GM10248 (cell line): ENCODE measurements at regions of chr22 and their contacts with region 1.

Region 1: GRCh38 chr22:31290494-31291471 is 1.5 kb downstream of the PIK3IP1 start:
- DNase-seq: peak; percentile 96
- CTCF ChIP-seq: no peak

Region 2: GRCh38 chr22:31302006-31302405 is 11.2 kb after region 1 on chr22:
- CTCF ChIA-PET with region 1: interaction called, 17 read pairs
- POLR2A ChIA-PET with region 1: interaction called, 3 read pairs
- DNase-seq: no peak
- CTCF ChIP-seq: no peak

Region 3: DNA sequence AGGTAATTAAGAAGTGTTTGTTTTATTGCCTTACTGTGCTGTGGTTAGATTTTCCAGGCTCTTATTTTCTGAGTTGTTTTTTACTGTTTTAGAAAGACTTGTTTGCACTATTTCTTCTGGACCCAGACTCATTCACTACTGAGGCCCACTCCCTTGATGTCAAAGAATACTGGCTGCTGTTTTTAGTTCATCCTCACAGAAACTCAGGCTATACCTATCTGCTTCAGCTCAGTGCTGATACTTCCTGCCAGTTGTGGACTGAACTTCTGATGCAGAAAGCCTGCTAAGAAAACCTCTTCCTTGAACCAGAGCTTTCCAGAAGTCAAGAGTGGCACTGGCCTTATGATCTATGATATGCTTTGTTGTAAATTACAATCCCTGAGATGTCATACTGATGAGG is 17.4 kb after region 1 on chr22:
- CTCF ChIA-PET with region 1: interaction called, 66 read pairs
- POLR2A ChIA-PET with region 1: no interaction called
- DNase-seq: no peak
- CTCF ChIP-seq: no peak